ENCODE measurements at regions of chr4 and their contacts with region 1.

Region 1: GRCh38 chr4:145234091-145234706 is 53.8 kb upstream of the OTUD4 start:
- DNase-seq: no peak
- H3K4me3 ChIP-seq: no peak overlapping the region
- H3K27ac ChIP-seq: no peak overlapping the region
- H3K4me1 ChIP-seq: peaks cover 0 to 5% (median 0%) of the 10 kb centered on the region in 3 donors
- H3K27me3 ChIP-seq: no peaks in the 10 kb centered on the region
- CTCF ChIP-seq: peak in 5 of 6 experiments; percentile 65 to 87 (median 70)
- POLR2A ChIP-seq: no peak

Region 2: GRCh38 chr4:145423017-145423708 is 189.0 kb after region 1 on chr4:
- intact Hi-C with region 1: no loop called
- DNase-seq: no peak
- H3K4me3 ChIP-seq: no peak overlapping the region
- H3K27ac ChIP-seq: no peak overlapping the region
- H3K4me1 ChIP-seq: no peaks in the 10 kb centered on the region
- H3K27me3 ChIP-seq: no peaks in the 10 kb centered on the region
- CTCF ChIP-seq: no peak
- POLR2A ChIP-seq: no peak

Region 3: GRCh38 chr4:145565328-145565727 is 331.1 kb after region 1 on chr4:
- intact Hi-C with region 1: loop called (anchors 10 kb)
- DNase-seq: no peak
- H3K4me3 ChIP-seq: no peak overlapping the region
- H3K27ac ChIP-seq: no peak overlapping the region
- H3K4me1 ChIP-seq: no peaks in the 10 kb centered on the region
- H3K27me3 ChIP-seq: no peaks in the 10 kb centered on the region
- CTCF ChIP-seq: no peak
- POLR2A ChIP-seq: no peak

Region 4: DNA sequence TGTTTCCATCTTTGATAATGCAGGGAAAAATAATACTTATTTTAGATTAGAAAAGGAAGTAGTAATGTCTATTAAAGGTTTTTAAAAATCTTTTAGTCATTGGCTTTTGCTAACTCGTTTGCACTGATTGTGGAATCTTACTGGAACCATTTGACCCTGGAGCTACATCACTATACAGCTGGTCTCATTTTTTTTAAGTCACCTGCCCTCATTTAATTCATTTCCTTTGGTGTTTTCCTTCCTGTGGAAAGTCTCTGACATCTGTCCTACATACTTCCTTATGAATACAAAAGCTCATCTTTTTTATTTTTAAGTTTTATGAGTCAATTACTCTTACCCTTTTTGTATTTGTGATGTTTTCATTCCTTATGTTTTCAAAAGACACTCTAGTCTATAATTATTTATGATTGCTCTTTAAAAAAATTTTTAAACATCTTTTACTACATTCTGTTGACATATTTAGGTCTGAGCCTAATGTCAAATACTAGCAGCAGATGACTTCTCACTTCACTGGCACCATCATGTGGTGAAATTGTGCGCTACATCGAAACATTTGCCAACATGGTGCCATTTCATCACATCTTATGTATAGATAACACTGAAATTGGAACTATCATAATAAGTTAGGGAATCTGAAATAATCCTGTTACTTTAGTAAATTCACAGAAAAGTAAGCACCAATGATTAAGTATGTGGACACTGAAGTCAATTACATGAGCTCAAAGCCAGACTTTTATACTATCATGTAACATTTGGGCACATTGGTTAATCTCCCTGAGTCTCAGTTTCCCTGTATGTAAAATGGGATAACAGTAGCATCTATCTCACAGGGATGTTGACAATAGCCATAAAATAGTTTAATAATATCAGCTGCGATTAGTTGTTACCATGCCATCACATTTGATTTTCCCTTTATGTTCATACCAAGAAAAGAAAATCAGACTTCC is 375.6 kb after region 1 on chr4:
- intact Hi-C with region 1: loop called (anchors 5 kb)
- DNase-seq: no peak
- H3K4me3 ChIP-seq: no peak overlapping the region
- H3K27ac ChIP-seq: no peak overlapping the region
- H3K4me1 ChIP-seq: no peaks in the 10 kb centered on the region
- H3K27me3 ChIP-seq: no peaks in the 10 kb centered on the region
- CTCF ChIP-seq: peak; percentile 62 to 86 (median 69)
- POLR2A ChIP-seq: no peak